Common myeloid progenitor, CD34-positive (primary cell): ENCODE measurements at regions of chr20 and their contacts with region 1.

Region 1: GRCh38 chr20:57473246-57474048 is 51.5 kb downstream of the CTCFL start:
- DNase-seq: peak; percentile 62 to 94 (median 91)
- H3K4me3 ChIP-seq: peak overlapping the region in 3 of 7 experiments; percentile 34 to 52 (median 52)
- H3K27ac ChIP-seq: peak overlapping the region in 1 of 2 experiments; percentile 55
- H3K4me1 ChIP-seq: peaks cover 28 to 73% (median 65%) of the 10 kb centered on the region in 4 experiments
- H3K27me3 ChIP-seq: no peaks in the 10 kb centered on the region

Region 2: DNA sequence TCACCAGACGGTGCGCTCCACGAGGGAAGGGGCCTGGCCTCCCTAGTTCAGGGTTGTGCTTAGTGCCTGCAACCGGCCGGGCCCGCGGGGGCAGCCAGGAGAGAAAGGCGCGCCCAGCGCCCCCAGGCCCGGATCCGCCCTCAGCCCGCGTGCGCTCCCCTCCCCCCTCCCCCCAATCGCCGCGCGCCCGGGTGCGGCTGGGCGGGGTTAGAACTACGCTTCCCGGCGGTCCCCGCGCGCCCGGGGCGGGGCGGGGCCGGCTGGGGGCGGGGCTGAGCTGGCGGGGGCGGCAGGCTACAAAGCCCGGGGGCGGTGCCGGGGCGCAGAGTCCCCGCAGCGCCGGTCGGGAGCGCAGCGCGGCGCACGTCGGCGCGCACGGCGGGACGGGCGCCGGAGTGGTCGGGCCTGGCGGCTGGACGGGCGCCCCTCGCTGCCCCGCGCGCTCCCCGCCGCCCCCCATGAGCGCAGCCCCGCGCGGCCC is 82.3 kb before region 1 on chr20 and contains the start of gene RBM38:
- CTCF ChIA-PET with region 1: interaction called, 10 read pairs
- POLR2A ChIA-PET with region 1: interaction called, 8 read pairs
- DNase-seq: peak; percentile 36 to 65 (median 61)
- H3K4me3 ChIP-seq: peak within 1 kb of the TSS; percentile 54 to 82 (median 73)
- H3K27ac ChIP-seq: peak within 1 kb of the TSS in 1 of 2 experiments; percentile 70
- H3K4me1 ChIP-seq: peaks cover 10 to 47% (median 45%) of the 10 kb centered on the region in 4 experiments
- H3K27me3 ChIP-seq: no peaks in the 10 kb centered on the region

Region 3: DNA sequence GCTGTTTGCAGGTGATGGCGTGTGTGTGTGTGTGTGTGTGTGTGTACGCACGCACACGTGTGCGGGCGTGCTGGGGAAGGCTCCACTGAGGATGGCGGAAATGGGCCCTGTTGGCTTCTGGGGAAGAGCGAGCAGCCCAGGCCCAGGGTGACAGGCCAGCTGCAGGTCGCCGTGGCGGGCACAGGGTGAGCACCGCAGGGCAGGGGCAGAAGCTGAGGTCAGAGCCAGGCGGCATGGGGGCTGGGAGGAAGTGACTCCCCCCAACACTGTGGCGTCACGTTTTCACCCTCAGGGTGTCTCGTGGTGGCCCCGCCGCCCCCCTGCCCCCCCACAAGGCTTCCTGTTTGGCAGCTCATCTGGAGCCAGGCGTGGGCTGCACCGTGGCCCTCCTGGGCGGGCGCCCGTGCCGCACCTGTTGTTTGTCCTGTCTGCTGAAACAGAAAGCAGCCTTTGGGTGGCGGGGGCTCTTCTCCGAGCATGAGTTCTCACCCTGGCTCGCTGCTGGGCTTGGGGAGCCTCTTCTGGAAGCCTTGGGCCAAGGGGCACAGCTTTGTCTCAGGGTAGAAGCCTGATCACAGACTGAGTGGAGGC is 75.1 kb before region 1 on chr20:
- CTCF ChIA-PET with region 1: interaction called, 15 read pairs
- POLR2A ChIA-PET with region 1: interaction called, 10 read pairs
- DNase-seq: peak; percentile 89 to 98 (median 97)
- H3K4me3 ChIP-seq: peak overlapping the region in 4 of 7 experiments; percentile 11 to 60 (median 38)
- H3K27ac ChIP-seq: peak overlapping the region; percentile 64 to 70
- H3K4me1 ChIP-seq: peaks cover 8 to 49% (median 41%) of the 10 kb centered on the region in 4 experiments
- H3K27me3 ChIP-seq: no peaks in the 10 kb centered on the region

Region 4: GRCh38 chr20:57432874-57433491 is 40.5 kb before region 1 on chr20:
- CTCF ChIA-PET with region 1: interaction called, 24 read pairs
- POLR2A ChIA-PET with region 1: no interaction called
- DNase-seq: peak; percentile 73 to 92 (median 89)
- H3K4me3 ChIP-seq: peak overlapping the region in 1 of 7 experiments; percentile 10
- H3K27ac ChIP-seq: peak overlapping the region in 1 of 2 experiments; percentile 26
- H3K4me1 ChIP-seq: peaks cover 13 to 43% (median 39%) of the 10 kb centered on the region in 4 experiments
- H3K27me3 ChIP-seq: no peaks in the 10 kb centered on the region

Region 5: DNA sequence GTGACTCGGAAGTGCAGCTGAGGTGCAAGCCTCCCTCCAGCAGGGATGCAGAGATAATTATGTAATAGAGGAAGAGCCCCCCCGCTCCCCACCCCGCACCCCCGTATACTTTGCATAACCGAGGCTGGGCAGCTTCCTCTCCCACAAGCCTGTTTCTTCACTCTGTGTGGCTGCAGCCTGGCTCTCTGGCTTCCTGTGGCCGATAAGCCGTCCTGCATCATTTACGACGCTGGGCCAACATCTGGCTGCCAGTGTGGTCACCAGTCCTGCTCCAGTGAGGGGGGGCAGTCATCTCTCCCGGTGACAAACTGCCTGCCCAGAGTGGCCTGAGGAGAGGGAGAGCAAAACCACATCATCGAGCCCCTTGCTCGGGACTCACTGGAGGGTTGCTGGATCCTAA is 23.0 kb before region 1 on chr20:
- CTCF ChIA-PET with region 1: interaction called, 27 read pairs
- POLR2A ChIA-PET with region 1: interaction called, 7 read pairs
- DNase-seq: peak; percentile 68 to 94 (median 91)
- H3K4me3 ChIP-seq: peak overlapping the region in 3 of 7 experiments; percentile 16 to 58 (median 46)
- H3K27ac ChIP-seq: peak overlapping the region in 1 of 2 experiments; percentile 36
- H3K4me1 ChIP-seq: peaks cover 16 to 44% (median 40%) of the 10 kb centered on the region in 4 experiments
- H3K27me3 ChIP-seq: no peaks in the 10 kb centered on the region

Region 6: DNA sequence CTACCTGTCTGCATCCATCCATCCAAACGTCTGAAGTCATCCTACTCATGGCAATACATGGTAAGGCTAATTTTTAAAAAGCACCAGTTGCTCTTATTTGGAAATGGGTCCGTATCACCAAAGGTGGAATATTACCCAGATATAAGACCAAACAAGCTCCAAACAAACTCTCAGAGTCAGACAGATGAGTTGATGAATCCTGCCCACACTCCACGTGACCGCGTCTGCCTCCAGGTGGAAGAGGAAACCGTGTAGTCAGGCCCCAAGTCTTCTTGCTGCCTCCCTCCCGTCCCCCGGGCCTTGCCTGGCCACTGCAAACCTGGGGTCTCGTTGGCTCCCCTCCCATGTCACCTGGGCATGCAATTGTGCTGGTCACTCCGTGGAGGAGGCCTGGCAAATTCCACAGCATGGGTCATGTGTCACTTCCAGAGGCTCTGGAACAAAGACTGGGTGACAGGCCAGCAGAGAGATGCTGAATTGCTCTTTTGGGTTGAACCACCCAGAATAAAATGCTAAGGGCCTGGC is 19.7 kb after region 1 on chr20:
- CTCF ChIA-PET with region 1: interaction called, 16 read pairs
- POLR2A ChIA-PET with region 1: no interaction called
- DNase-seq: no peak
- H3K4me3 ChIP-seq: no peak overlapping the region
- H3K27ac ChIP-seq: no peak overlapping the region
- H3K4me1 ChIP-seq: peaks cover 0 to 7% (median 3%) of the 10 kb centered on the region in 4 experiments
- H3K27me3 ChIP-seq: peaks cover 0 to 4% (median 2%) of the 10 kb centered on the region in 5 experiments

Region 7: DNA sequence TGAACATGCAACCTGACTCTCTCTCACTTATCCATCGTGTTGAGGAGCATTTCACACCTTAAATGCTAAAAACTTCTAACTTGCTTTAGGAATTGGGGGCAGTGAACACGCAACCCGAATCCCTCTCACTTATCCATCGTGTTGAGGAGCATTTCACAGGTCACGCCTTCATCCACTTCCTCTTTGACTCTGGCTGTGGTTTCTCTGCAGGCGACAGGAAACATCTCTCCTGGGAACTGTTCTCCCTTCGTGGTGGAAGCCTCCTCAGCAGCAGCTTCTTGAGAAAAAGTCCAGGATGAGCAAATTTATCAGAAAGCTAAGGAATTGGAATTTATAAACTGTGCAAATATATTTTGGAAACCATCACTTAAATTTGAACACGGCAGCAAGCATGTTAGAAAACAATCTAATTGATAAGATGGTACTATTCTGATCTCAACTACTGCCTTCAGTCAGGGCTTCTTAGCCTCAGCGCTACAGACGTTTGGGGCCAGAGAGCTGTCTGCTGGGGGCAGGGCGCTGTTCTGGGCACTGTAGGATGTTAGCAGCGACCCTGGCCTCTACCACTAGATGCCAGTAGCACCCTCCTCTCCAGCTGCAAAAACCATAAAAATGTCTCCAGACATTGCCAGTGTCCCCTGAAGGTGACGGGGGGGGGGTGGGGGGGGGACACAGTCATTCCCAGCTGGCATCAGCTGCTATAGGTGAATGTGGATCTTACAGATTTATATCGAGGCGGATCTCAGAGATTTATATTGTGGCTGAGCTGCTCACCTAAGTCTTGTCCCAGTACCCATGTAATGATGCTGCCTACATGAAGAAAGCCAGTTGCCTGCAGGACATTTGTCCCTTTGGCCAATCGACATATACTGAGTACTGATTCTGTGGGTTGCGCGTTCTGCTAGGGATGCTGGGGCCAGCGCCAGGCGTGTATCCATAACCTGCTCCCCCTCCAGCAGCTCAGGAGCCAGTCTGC is 25.3 kb after region 1 on chr20:
- CTCF ChIA-PET with region 1: interaction called, 16 read pairs
- POLR2A ChIA-PET with region 1: no interaction called
- DNase-seq: peak; percentile 49 to 73 (median 64)
- H3K4me3 ChIP-seq: peak overlapping the region in 2 of 7 experiments; percentile 39 to 56
- H3K27ac ChIP-seq: no peak overlapping the region
- H3K4me1 ChIP-seq: peaks cover 11 to 23% (median 14%) of the 10 kb centered on the region in 4 experiments
- H3K27me3 ChIP-seq: peaks cover 9 to 28% (median 15%) of the 10 kb centered on the region in 5 experiments

Region 8: DNA sequence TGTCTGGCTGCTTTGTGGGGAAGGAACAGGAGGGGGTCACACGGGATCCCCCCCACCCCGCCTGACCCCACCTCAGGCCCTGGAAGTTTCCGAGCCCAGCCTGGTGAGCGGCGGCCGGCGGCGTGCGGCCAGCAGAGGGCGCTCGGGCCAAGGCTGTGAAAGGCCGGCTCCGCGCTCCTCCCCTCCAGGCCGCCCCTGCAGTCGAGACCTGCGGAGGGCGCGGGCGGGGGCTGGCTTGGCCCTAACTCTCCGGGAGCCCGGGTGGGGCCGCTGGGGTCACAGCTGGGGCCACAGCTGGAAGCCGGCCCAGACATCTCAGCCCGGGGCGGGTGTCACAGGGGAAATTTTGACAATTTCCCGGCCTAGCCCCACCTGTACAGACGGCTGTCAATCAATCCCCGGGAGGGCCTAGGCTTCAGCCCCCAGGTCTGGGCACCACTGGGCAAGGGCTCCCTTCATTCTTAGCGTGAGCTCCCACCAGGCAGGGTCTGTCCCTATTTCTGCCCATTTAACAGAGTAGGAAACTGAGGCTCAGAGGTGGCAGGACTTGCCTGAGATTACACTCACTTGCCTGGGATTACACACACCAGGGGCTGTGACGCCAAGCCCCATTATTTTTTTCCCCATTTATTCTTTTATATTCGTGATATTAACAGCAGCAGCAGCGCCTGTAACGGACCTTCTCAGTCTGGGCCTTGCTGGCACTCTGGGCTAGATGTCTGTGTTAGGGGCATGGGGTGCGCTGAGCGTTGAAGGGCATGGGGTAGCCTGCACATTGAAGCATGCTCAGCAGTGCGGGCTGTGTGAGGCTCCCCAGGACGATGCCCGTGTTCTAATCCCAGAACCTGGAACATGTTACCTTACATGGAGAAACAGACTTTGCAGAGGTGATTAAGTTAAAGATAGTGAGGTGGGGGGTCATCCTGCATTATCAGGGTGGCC is 123.8 kb after region 1 on chr20:
- CTCF ChIA-PET with region 1: no interaction called
- POLR2A ChIA-PET with region 1: no interaction called
- DNase-seq: peak; percentile 59 to 75 (median 74)
- H3K4me3 ChIP-seq: peak overlapping the region in 2 of 7 experiments; percentile 11 to 60
- H3K27ac ChIP-seq: no peak overlapping the region
- H3K4me1 ChIP-seq: peaks cover 0 to 4% (median 0%) of the 10 kb centered on the region in 4 experiments
- H3K27me3 ChIP-seq: peaks cover 0 to 8% (median 0%) of the 10 kb centered on the region in 5 experiments